ENCODE measurements at regions of chr20 and their contacts with region 1.

Region 1: GRCh38 chr20:62182613-62183425 is at the start of gene MTG2:
- DNase-seq: peak; percentile 98
- H3K4me3 ChIP-seq: peak within 1 kb of the TSS; percentile 91
- H3K27ac ChIP-seq: peak within 1 kb of the TSS; percentile 83
- H3K4me1 ChIP-seq: peaks cover 18% of the 10 kb centered on the region
- CTCF ChIP-seq: no peak
- total RNA-seq, gene MTG2: 20.3 and 24.1 TPM in 2 replicates

Region 2: DNA sequence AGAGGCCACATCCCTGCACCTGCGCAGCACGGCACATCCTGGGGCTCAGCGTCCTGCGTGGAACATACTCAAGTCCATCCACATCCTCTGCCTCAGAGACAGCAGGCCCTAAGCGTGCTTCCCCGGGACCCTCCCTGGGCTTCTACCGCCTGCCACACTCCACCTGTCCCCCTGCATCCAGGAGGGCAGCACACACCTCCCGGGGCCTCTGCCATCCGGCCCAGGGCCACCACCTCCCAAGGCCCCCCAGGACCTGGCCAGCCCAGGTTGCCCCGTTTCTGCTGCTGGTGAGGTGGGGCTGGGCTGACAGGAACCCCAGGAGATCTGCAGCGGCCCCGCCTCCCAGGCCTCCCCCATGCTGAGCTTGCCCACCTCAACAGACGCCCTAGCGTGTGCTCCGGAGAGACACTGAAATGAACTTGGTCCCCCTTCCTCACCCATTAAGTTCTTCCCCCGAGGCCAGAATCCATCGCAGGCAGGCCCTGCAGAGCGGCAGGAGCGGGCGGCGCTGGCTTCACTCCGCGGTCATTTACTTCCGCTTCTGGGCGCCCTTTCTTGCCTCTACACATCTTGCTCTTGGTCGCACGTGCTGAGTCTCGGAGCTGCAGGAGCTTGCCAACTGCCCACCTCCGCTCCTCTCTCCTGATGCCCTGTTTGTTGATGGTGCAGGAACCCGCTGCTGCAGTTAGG is 352.4 kb before region 1 on chr20:
- CTCF ChIA-PET with region 1: no interaction called
- POLR2A ChIA-PET with region 1: no interaction called
- intact Hi-C with region 1: no loop called
- DNase-seq: no peak
- H3K4me3 ChIP-seq: no peak overlapping the region
- H3K27ac ChIP-seq: no peak overlapping the region
- H3K4me1 ChIP-seq: no peaks in the 10 kb centered on the region
- CTCF ChIP-seq: no peak

Region 3: GRCh38 chr20:62143118-62143973 is 39.5 kb before region 1 on chr20 and contains the starts of genes PSMA7 and SS18L1:
- CTCF ChIA-PET with region 1: no interaction called
- POLR2A ChIA-PET with region 1: interaction called, 3 read pairs
- intact Hi-C with region 1: loop called (anchors 1 kb)
- DNase-seq: peak; percentile 93
- H3K4me3 ChIP-seq: peak within 1 kb of the TSS; percentile 98
- H3K27ac ChIP-seq: peak within 1 kb of the TSS; percentile 37
- H3K4me1 ChIP-seq: peaks cover 25% of the 10 kb centered on the region
- CTCF ChIP-seq: no peak
- total RNA-seq, gene PSMA7: 247 and 362 TPM in 2 replicates
- total RNA-seq, gene SS18L1: 13.0 and 17.0 TPM in 2 replicates

Region 4: GRCh38 chr20:62165762-62166399 is 16.9 kb before region 1 on chr20:
- CTCF ChIA-PET with region 1: no interaction called
- POLR2A ChIA-PET with region 1: no interaction called
- intact Hi-C with region 1: no loop called
- DNase-seq: no peak
- H3K4me3 ChIP-seq: no peak overlapping the region
- H3K27ac ChIP-seq: no peak overlapping the region
- H3K4me1 ChIP-seq: no peaks in the 10 kb centered on the region
- CTCF ChIP-seq: no peak

Region 5: DNA sequence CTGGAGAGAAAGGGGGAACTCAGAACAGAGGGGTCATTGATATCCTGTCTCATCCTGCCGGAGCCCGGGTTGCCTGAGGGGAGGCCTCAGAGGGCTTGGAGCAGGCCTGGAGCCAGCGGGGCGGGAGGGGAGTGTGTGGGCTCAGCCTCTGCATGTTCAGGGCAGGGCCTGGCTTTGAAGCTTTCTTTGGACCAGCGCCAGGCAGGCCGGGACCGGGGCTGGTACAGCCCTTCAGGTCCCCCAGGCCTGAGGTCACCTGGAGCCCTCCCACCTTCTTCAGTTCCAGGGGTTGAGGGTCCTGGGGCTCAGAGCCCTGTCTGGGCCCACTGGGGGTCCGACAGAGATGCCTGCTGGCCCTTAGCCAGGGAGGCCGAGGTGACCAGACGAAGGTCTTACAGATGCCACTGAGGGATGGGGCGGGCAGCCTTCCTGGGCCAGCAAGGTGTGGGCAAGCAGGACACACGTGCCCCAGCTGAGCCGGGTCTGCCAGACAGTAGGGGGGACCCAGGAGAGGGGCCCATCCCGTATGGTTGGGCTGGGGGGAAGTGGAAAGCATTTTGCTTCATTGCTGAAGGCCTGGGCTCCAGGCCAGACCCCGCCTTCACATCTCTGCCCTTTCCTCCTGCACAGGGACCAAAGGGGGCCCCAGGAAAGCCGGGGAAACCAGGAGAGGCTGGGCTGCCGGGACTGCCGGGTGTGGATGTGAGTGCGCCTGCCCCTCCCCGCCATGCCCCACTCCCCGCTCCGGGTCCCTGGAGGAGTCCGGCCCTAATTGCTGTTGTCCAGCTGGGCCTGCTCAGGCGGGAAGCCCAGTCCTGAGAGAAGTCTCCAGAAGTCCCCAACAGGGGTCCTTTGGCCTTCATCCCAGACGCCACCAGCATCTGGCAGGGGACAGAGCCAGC is 636.0 kb after region 1 on chr20:
- CTCF ChIA-PET with region 1: no interaction called
- POLR2A ChIA-PET with region 1: no interaction called
- intact Hi-C with region 1: no loop called
- DNase-seq: no peak
- H3K4me3 ChIP-seq: no peak overlapping the region
- H3K27ac ChIP-seq: no peak overlapping the region
- H3K4me1 ChIP-seq: no peaks in the 10 kb centered on the region
- CTCF ChIP-seq: no peak